GM12878 (cell line): ENCODE measurements at regions of chr7 and their contacts with region 1.

Region 1: GRCh38 chr7:70016044-70016770 is 417.9 kb downstream of the AUTS2 start:
- DNase-seq: no peak
- ATAC-seq: peak; percentile 67
- H3K4me3 ChIP-seq: no peak overlapping the region
- H3K27ac ChIP-seq: no peak overlapping the region
- H3K4me1 ChIP-seq: peaks cover 4% of the 10 kb centered on the region; the same call in 1 of the 2 replicates
- H3K27me3 ChIP-seq: no peaks in the 10 kb centered on the region
- CTCF ChIP-seq: no peak
- EP300 ChIP-seq: no peak
- POLR2A ChIP-seq: no peak
- RAD21 ChIP-seq: no peak

Region 2: DNA sequence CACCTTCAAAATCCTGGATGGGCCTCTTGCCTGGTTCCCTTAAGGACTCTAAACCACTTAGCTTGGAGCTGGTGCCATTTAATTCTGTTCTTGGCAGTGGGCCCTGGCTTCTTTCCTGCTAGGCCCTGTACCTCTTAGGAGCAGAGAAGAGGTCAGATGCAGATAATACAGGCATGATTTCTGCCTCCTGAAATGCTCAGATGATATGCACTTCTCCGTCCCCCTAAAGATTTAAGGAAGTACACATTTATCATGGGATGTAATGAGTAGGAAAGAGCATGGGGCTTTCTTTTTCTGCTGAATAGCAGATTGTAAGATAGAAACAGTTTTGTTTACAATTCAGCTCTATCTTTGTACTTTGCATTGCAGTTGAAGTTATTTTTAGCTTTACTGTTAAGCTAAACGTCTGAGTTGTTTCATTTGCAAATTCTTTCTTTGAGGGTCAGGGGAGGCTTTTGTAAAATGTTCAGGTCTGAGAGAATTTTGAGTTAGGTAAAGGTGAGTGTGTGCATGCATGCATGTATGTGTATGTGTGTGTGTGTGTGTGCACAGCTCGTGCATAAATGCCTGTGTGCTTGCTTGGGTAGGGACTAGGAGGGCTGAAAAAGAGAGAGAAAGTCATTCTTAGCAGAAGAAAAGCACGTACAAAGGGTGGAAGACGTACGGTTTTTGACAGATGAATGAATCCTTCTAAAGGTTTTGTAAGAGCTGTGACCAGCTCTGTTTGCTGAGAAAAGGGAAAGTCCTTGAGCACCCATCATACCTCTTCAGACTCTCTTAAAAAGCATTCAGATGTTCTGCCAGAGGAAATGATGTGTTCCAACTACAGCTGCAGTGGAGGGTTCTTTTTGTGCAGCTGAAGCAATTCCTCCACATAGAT is 53.8 kb before region 1 on chr7:
- CTCF ChIA-PET with region 1: interaction called, 3 read pairs
- POLR2A ChIA-PET with region 1: no interaction called
- RAD21 ChIA-PET with region 1: interaction called, 10 read pairs
- SMC1A ChIA-PET with region 1: interaction called, 4 read pairs
- in situ Hi-C with region 1: no loop called
- intact Hi-C with region 1: no loop called
- DNase-seq: peak; percentile 39
- ATAC-seq: peak; percentile 78
- H3K4me3 ChIP-seq: peak overlapping the region; percentile 25; the same call in 1 of the 2 replicates
- H3K27ac ChIP-seq: peak overlapping the region; percentile 36
- H3K4me1 ChIP-seq: peaks cover 10% of the 10 kb centered on the region
- H3K27me3 ChIP-seq: no peaks in the 10 kb centered on the region
- CTCF ChIP-seq: no peak
- EP300 ChIP-seq: no peak
- POLR2A ChIP-seq: no peak
- RAD21 ChIP-seq: no peak

Region 3: GRCh38 chr7:70035519-70035918 is 19.3 kb after region 1 on chr7:
- CTCF ChIA-PET with region 1: no interaction called
- POLR2A ChIA-PET with region 1: interaction called, 6 read pairs
- RAD21 ChIA-PET with region 1: no interaction called
- SMC1A ChIA-PET with region 1: interaction called, 11 read pairs
- in situ Hi-C with region 1: no loop called
- intact Hi-C with region 1: no loop called
- DNase-seq: no peak
- ATAC-seq: no peak
- H3K4me3 ChIP-seq: no peak overlapping the region
- H3K27ac ChIP-seq: no peak overlapping the region
- H3K4me1 ChIP-seq: no peaks in the 10 kb centered on the region
- H3K27me3 ChIP-seq: no peaks in the 10 kb centered on the region
- CTCF ChIP-seq: no peak
- EP300 ChIP-seq: no peak
- POLR2A ChIP-seq: no peak
- RAD21 ChIP-seq: no peak